GM10248 (cell line): ENCODE measurements at regions of chr2 and their contacts with region 1.

Region 1: GRCh38 chr2:39227628-39228412 is 15.9 kb downstream of the CDKL4 start:
- DNase-seq: peak; percentile 70
- CTCF ChIP-seq: peak; percentile 70

Region 2: GRCh38 chr2:38940746-38941145 is 287.1 kb before region 1 on chr2:
- CTCF ChIA-PET with region 1: interaction called, 238 read pairs
- POLR2A ChIA-PET with region 1: no interaction called
- DNase-seq: no peak
- CTCF ChIP-seq: no peak

Region 3: DNA sequence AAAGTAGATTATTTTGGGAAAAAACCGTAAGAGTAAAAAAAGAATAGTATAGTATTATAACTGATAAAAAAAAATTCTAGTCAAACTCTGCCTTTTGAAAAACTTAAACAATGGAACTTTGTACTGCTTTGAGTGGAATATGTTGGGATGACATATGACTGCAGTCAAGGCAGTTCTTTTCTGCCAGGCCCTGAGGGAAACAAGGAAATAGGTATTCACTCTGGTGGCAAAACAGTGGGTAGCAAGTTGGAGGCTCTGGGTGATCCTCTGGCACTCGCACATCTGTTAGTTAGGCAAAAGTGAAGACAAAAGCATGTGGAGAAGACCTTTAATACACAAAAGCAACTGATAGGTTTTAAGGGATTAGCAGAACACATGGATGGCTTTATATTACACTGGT is 235.9 kb before region 1 on chr2:
- CTCF ChIA-PET with region 1: interaction called, 15 read pairs
- POLR2A ChIA-PET with region 1: no interaction called
- DNase-seq: no peak
- CTCF ChIP-seq: no peak

Region 4: GRCh38 chr2:39059366-39059952 is 168.4 kb before region 1 on chr2:
- CTCF ChIA-PET with region 1: interaction called, 289 read pairs
- POLR2A ChIA-PET with region 1: no interaction called
- DNase-seq: peak; percentile 39
- CTCF ChIP-seq: peak; percentile 62

Region 5: GRCh38 chr2:39107719-39108273 is 120.0 kb before region 1 on chr2:
- CTCF ChIA-PET with region 1: interaction called, 13 read pairs
- POLR2A ChIA-PET with region 1: no interaction called
- DNase-seq: no peak
- CTCF ChIP-seq: no peak

Region 6: DNA sequence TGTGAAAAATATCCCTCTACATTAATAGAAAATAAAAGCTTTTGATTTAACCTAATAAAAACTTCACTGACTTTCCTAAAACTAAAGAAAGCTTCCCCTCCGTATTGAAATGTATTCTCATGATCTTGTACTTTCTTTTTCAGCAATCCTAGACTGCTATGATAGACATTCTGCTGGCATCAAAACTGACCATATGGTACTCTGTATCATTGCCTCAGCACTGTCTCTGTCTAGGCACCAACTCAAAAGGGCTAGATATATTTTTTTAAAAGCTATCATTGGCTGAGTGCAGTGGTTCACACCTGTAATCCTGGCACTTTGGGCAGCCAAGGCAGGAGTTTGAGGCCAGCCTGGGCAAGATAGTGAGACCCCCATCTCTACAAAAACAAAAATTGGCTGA is 17.0 kb before region 1 on chr2:
- CTCF ChIA-PET with region 1: interaction called, 11 read pairs
- POLR2A ChIA-PET with region 1: no interaction called
- DNase-seq: no peak
- CTCF ChIP-seq: no peak

Region 7: GRCh38 chr2:39350658-39351057 is 122.8 kb after region 1 on chr2:
- CTCF ChIA-PET with region 1: no interaction called
- POLR2A ChIA-PET with region 1: no interaction called
- DNase-seq: no peak
- CTCF ChIP-seq: no peak

Region 8: GRCh38 chr2:39728941-39729351 is 501.1 kb after region 1 on chr2:
- CTCF ChIA-PET with region 1: interaction called, 11 read pairs
- POLR2A ChIA-PET with region 1: no interaction called
- DNase-seq: peak; percentile 34
- CTCF ChIP-seq: peak; percentile 52